ENCODE measurements at regions of chr17 and their contacts with region 1.

Region 1: DNA sequence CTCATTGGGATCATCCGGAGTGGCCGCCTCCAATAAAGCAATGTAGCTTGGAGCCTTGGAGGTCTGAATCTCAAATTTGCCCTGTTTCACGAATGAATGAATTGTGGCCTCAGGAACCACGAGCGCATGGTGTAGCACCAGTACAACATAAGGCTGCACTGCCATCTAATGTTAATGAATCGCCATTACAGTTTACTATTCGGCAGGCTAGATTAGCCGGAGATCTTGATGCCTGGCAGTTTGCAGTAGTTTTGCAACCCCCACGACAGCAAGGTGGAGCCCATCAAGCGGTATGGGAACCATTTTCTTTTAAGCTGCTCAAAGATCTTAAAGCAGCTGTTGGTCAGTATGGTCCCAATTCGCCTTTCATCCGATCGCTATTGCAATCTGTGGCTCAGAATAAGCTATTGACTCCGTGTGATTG is 18.8 kb downstream of the ALOX15B start:
- DNase-seq: peak in 1 of 2 experiments; percentile 56
- H3K4me3 ChIP-seq: peak overlapping the region in 1 of 4 experiments; percentile 34; a peak in 2 of 8 replicates
- H3K27ac ChIP-seq: no peak overlapping the region
- H3K4me1 ChIP-seq: peaks cover 0 to 12% (median 7%) of the 10 kb centered on the region in 4 experiments; a peak in 4 of 7 replicates
- H3K27me3 ChIP-seq: peaks cover 1 to 16% (median 13%) of the 10 kb centered on the region in 4 experiments; a peak in 5 of 7 replicates
- CTCF ChIP-seq: peak in 2 of 3 experiments; percentile 81 to 88; a peak in 3 of 4 replicates
- EP300 ChIP-seq: no peak
- POLR2A ChIP-seq: no peak
- RAD21 ChIP-seq: peak; percentile 92 to 96

Region 2: GRCh38 chr17:7850701-7851437 is 206.8 kb before region 1 on chr17:
- CTCF ChIA-PET with region 1: no interaction called
- POLR2A ChIA-PET with region 1: no interaction called
- DNase-seq: no peak
- H3K4me3 ChIP-seq: peak overlapping the region; percentile 39 to 65 (median 52)
- H3K27ac ChIP-seq: no peak overlapping the region
- H3K4me1 ChIP-seq: peaks cover 0 to 29% (median 24%) of the 10 kb centered on the region in 4 experiments; a peak in 6 of 7 replicates
- H3K27me3 ChIP-seq: peaks cover 27 to 46% (median 41%) of the 10 kb centered on the region in 4 experiments
- CTCF ChIP-seq: no peak
- EP300 ChIP-seq: no peak
- POLR2A ChIP-seq: no peak
- RAD21 ChIP-seq: no peak

Region 3: DNA sequence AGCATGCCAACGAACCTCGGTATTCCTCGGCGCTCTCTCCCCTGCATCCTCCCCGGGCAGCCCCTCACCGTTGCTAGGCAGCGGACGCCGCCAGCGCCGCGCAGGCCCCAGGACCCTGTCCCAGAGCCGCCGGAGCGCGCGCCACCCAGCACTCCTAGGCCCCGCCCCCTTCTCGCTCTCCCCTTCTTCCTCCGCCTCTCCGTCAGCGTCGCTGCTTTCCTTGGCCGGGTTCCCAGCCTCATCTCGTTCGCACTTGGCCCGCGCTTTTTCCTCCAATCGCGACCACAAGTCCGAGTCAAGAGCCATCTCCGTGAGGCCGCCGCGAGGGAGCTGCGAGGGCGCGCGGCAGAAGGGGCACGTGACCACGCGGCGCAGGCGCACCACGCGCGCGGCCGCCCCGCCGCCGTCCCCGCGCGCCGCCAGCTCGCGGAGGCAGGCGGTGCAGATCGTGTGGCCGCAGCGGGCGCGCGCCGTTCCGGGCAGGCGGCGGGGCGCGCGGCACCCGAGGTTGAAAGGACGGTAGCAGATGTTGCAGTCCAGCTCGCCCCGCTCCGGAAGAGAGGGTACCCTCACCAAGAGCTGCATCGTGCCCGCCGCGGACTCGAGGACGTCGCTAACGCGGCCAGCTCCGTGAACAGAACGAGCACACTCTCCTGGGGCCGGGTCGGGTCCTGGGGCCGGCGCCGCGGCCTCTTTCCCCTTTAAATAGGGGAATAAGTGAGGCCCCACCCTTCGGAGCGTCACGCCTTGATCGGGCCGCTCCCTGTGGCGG is 141.9 kb before region 1 on chr17 and contains the start of gene RNF227:
- CTCF ChIA-PET with region 1: interaction called, 20 read pairs
- POLR2A ChIA-PET with region 1: no interaction called
- DNase-seq: peak in 1 of 2 experiments; percentile 92
- H3K4me3 ChIP-seq: peak within 1 kb of the TSS; percentile 30 to 53 (median 37)
- H3K27ac ChIP-seq: no peak within 1 kb of the TSS
- H3K4me1 ChIP-seq: peaks cover 0 to 6% (median 6%) of the 10 kb centered on the region in 4 experiments; a peak in 5 of 7 replicates
- H3K27me3 ChIP-seq: peaks cover 10 to 30% (median 26%) of the 10 kb centered on the region in 4 experiments
- CTCF ChIP-seq: no peak
- EP300 ChIP-seq: no peak
- POLR2A ChIP-seq: no peak
- RAD21 ChIP-seq: no peak
- total RNA-seq, gene RNF227: 0.63 and 0.77 TPM in 2 replicates

Region 4: DNA sequence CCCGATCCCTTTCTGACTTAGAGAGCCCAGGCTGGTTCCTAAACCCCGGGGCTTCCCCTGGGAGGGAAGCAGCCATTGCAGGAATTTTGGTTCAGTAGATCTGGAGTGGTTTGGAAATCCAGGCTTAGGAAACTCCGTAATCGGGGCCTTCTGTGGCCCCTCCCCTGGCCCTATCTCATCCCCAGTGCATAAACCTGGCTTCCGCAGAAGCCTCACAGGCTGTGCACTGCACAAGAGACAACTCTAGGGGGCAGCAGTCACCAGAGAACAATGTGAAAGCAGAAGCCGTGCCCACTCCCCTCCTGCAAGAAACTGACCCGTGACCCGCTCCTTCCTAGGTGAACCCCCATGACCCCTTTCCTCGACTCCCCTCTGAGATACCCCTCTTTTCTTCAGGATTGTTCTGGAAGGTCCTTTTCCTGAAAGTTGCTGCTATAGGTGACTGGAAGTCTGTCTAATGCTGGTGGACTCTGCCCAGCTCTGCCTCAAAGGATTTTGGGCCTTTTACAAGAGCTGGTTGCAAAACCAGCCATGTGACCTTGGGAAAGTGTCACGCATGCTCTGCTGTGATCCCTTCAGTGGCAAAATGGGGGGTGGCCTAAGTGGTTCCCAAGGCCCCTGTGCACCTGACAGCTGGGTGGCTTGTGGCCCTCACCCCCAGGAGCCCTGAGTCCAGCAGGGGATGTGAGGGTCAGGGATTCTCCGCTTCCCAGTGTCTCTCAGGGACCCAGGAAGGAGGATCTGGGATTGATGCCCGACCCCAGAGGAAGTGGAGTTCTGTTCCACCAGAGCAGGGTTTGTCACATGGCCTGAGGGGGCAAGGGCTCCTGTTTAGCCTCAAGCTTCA is 40.8 kb before region 1 on chr17:
- CTCF ChIA-PET with region 1: interaction called, 93 read pairs
- POLR2A ChIA-PET with region 1: interaction called, 5 read pairs
- DNase-seq: peak; percentile 41 to 91
- H3K4me3 ChIP-seq: peak overlapping the region; percentile 53 to 80 (median 66)
- H3K27ac ChIP-seq: no peak overlapping the region
- H3K4me1 ChIP-seq: peaks cover 0 to 5% (median 0%) of the 10 kb centered on the region in 4 experiments; a peak in 2 of 7 replicates
- H3K27me3 ChIP-seq: peaks cover 5 to 35% (median 21%) of the 10 kb centered on the region in 4 experiments
- CTCF ChIP-seq: peak; percentile 84 to 93 (median 89)
- EP300 ChIP-seq: no peak
- POLR2A ChIP-seq: no peak
- RAD21 ChIP-seq: peak; percentile 84 to 89

Region 5: GRCh38 chr17:8079291-8080207 is 21.8 kb after region 1 on chr17:
- CTCF ChIA-PET with region 1: interaction called, 270 read pairs
- POLR2A ChIA-PET with region 1: interaction called, 4 read pairs
- DNase-seq: peak; percentile 74 to 95
- H3K4me3 ChIP-seq: peak overlapping the region; percentile 58 to 72 (median 64)
- H3K27ac ChIP-seq: no peak overlapping the region
- H3K4me1 ChIP-seq: peaks cover 0 to 5% (median 2%) of the 10 kb centered on the region in 4 experiments; a peak in 4 of 7 replicates
- H3K27me3 ChIP-seq: peaks cover 3 to 40% (median 29%) of the 10 kb centered on the region in 4 experiments
- CTCF ChIP-seq: peak; percentile 95 to 96 (median 96)
- EP300 ChIP-seq: no peak
- POLR2A ChIP-seq: no peak
- RAD21 ChIP-seq: peak; percentile 60 to 69

Region 6: DNA sequence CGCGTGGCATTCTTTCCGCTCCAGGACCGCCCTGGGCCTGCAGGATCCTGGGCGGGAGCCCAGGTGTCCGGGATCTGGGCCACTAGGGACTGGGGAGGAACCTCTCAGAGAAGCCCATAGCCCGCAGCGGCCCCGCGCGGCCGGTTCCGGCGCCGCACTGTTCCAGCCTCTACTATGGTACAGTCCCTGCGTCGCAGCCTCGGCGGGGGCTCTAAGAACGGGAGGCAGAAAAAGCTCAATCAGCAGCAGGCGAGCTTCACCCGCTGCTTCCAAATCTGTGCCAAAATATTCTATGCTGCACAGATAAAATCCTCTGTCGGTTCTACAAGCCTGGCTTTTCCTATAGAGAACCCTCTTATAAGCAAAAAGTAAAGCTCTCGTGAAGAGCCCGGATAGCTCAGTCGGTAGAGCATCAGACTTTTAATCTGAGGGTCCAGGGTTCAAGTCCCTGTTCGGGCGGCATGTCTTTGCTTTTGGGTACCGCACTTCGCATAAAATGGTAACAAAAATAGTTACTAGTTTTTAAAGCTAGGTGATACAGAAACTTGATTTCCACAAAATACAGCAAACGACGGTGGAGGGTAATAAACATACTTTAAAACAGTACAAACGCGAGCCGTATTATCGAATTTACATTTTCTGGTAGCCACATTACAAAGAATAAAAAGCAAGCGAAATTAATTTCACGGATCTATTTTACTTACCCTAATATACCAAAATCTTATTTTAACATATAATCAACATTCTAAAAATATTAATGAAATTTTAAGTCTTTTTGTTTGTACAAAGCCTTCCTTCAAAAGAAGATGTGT is 61.3 kb after region 1 on chr17:
- CTCF ChIA-PET with region 1: interaction called, 116 read pairs
- POLR2A ChIA-PET with region 1: interaction called, 6 read pairs
- DNase-seq: peak in 1 of 2 experiments; percentile 96
- H3K4me3 ChIP-seq: peak overlapping the region; percentile 75 to 89 (median 82)
- H3K27ac ChIP-seq: no peak overlapping the region
- H3K4me1 ChIP-seq: peaks cover 0 to 12% (median 6%) of the 10 kb centered on the region in 4 experiments; a peak in 5 of 7 replicates
- H3K27me3 ChIP-seq: peaks cover 27 to 60% (median 52%) of the 10 kb centered on the region in 4 experiments
- CTCF ChIP-seq: peak; percentile 78 to 92 (median 81)
- EP300 ChIP-seq: 0 out of 3 replicates have a peak, but pooled peaks of 1 of the 2 experiments have one; percentile 19
- POLR2A ChIP-seq: no peak
- RAD21 ChIP-seq: peak; percentile 58 to 72

Measured in H1 (cell line).